Keratinocyte (primary cell): ENCODE measurements at regions of chr1 and their contacts with region 1.

Region 1: DNA sequence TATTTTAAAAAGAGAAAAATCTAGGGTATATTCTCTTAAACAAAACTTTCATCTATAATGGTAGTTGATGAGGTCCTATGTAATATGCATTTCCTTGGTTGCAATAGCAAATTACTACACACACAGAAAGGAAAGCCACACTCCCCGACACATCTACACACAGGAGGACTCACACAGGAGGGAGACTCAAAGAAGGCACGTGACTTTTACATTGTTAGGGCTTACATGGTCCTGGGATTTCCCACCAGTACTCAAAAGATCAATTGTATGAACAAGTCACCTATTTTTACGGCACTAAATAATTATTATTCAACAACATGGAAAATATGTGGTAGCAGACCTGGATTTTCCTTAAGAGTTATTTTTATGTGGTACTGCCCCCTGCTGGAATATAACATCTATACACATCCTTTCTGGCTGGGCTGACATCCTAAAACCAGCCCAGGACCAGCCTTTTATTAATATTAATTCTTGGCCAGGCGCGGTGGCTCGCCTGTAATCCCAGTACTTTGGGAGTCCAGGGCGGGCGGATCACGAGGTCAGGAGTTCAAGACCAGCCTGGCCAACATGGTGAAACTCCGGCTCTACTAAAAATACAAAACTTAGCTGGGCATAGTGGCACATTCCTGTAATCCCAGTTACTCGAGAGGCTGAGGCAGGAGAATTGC is 33.9 kb upstream of the LGALS8 start:
- DNase-seq: no peak
- H3K4me3 ChIP-seq: no peak overlapping the region
- H3K27ac ChIP-seq: no peak overlapping the region
- H3K4me1 ChIP-seq: no peaks in the 10 kb centered on the region
- H3K27me3 ChIP-seq: no peaks in the 10 kb centered on the region
- CTCF ChIP-seq: peak; percentile 28 to 44 (median 40)

Region 2: DNA sequence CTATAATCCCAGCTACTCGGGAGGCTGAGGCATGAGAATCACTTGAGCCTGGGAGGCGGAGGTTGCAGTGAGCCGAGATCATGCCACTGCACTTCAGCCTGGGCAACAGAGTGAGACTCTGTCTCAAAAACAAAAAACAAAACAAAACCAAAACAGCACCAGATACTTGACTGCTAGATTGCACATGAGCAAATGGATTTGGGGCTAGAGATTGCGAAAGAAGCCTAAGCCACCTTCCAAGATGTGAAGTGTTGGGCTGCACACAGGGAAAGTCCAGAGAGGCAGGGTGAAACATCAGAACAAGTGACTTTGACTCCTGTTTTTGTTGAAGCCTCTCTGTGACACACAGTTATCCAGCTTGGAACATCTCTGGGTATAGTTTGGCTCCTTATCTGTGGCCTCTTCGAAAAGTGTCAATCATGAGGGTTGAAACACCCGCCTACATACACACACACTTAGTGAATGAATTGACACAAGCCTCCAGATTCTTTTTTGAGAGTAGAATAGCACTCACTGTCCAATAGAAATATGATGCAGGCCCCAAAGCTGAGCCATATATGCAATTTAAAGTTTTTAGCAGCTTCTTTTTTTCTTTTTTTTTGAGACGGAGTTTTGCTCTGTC is 381.7 kb before region 1 on chr1:
- dilution Hi-C with region 1: no loop called
- DNase-seq: no peak
- H3K4me3 ChIP-seq: no peak overlapping the region
- H3K27ac ChIP-seq: no peak overlapping the region
- H3K4me1 ChIP-seq: peaks cover 9% of the 10 kb centered on the region
- H3K27me3 ChIP-seq: no peaks in the 10 kb centered on the region
- CTCF ChIP-seq: no peak

Region 3: GRCh38 chr1:236137285-236137852 is 352.5 kb before region 1 on chr1:
- dilution Hi-C with region 1: loop called (anchors 10 kb)
- DNase-seq: no peak
- H3K4me3 ChIP-seq: no peak overlapping the region
- H3K27ac ChIP-seq: no peak overlapping the region
- H3K4me1 ChIP-seq: no peaks in the 10 kb centered on the region
- H3K27me3 ChIP-seq: peaks cover 12% of the 10 kb centered on the region
- CTCF ChIP-seq: peak in 1 of 3 experiments; percentile 13